A549 (cell line): ENCODE measurements at regions of chr5 and their contacts with region 1.

Region 1: DNA sequence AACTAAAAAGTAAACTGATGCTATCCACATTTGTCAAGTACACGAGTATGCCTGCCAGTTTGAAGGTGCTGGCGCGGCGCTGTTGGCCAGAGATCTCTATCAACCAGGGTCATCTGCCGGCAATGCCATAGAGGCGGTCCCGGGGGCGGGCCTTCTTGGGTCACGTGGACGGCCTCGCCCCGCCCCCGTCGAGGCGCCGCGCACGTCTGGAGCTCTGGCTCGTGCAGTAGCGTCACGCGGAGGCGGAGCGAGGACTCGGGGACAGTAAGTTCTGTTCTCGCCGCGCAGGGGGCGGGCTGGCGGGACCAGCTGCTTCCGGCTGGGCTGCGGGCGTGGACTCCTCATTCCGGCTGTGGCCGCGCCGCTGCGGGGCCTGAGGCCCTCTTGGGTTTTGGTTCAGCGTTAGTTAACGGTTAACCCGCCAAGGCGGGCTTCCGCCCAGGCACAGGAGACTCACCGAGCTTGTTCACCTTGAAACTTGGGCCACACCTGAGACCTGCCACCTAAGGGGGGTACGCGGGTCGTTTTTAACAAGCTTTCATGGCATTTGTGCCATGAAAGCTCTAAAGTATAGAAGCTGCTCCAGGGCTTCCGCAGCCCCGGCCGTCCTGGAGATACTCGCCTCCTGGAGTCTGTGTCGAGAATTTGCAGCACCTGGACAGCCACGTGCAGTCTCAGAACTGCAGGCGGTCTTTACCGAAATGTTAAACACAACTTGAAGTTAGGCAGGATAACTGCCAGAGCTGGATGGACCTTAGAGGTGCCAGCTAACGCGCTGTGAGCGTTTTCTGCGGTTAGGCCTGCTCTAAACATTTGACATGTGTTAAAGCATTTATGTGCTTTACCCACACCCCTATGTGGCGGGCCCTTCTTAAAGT is at the start of gene RFESD:
- DNase-seq: peak; percentile 83 to 99
- ATAC-seq: peak; percentile 98
- H3K4me3 ChIP-seq: peak within 1 kb of the TSS; percentile 47
- H3K27ac ChIP-seq: peak within 1 kb of the TSS; percentile 85 to 87
- H3K4me1 ChIP-seq: peaks cover 14% of the 10 kb centered on the region
- CTCF ChIP-seq: no peak; the same call in 2 of the 3 replicates
- EP300 ChIP-seq: no peak
- POLR2A ChIP-seq: peak; percentile 73
- RAD21 ChIP-seq: peak in 1 of 2 experiments; percentile 32; a peak in 1 of 5 replicates
- polyA plus RNA-seq, gene RFESD: 4.8 and 5.4 TPM in 2 replicates

Region 2: GRCh38 chr5:95664204-95664786 is 17.5 kb after region 1 on chr5:
- CTCF ChIA-PET with region 1: interaction called, 19 read pairs
- POLR2A ChIA-PET with region 1: interaction called, 4 read pairs
- DNase-seq: no peak
- ATAC-seq: no peak
- H3K4me3 ChIP-seq: no peak overlapping the region
- H3K27ac ChIP-seq: peak overlapping the region in 1 of 2 experiments; percentile 18; a peak in 1 of 6 replicates
- H3K4me1 ChIP-seq: peaks cover 3% of the 10 kb centered on the region; the same call in 1 of the 3 replicates
- CTCF ChIP-seq: peak; percentile 88
- EP300 ChIP-seq: no peak
- POLR2A ChIP-seq: no peak
- RAD21 ChIP-seq: peak; percentile 70 to 76

Region 3: GRCh38 chr5:95730730-95731570 is 84.2 kb after region 1 on chr5 and contains the start of gene RHOBTB3:
- CTCF ChIA-PET with region 1: interaction called, 5 read pairs
- POLR2A ChIA-PET with region 1: interaction called, 32 read pairs
- DNase-seq: peak; percentile 49 to 66
- ATAC-seq: peak; percentile 86 to 89
- H3K4me3 ChIP-seq: peak within 1 kb of the TSS; percentile 77
- H3K27ac ChIP-seq: peak within 1 kb of the TSS; percentile 85 to 92
- H3K4me1 ChIP-seq: peaks cover 17% of the 10 kb centered on the region; the same call in 1 of the 3 replicates
- CTCF ChIP-seq: peak; percentile 12; the same call in 1 of the 3 replicates
- EP300 ChIP-seq: no peak
- POLR2A ChIP-seq: peak; percentile 58
- RAD21 ChIP-seq: peak in 1 of 2 experiments; percentile 20; a peak in 1 of 5 replicates
- polyA plus RNA-seq, gene RHOBTB3: 28.6 and 37.5 TPM in 2 replicates

Region 4: DNA sequence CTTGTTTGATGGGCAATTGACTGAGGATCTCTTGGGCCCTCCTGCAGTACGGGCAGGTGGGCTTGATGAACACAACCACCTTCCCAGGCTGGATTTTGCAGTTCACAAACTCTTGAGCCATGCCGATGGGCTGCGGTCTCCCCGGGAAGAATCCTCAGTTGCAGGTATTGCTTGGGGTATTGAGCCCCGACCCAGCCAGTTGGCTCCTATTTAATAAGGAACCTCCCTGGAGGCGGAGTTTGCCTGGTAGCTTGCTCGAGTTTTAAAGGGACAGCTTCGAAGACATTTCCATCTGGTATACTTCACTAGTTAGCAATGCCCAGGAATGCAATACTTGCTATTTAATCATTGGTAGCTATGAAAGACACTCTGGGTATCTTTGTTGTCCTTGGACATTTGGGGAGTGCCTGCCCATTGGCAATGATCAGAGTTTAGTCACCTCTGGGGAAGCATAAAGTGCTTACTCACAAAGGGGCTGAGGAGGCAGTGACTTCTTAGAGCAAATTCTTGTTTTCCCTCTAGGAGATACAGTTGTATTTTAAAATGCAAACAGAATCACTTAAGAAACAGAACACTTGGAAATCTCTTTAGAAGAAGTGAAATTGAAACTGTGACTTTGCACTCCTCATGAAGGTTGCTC is 175.9 kb after region 1 on chr5 and contains the start of gene GLRX:
- CTCF ChIA-PET with region 1: interaction called, 11 read pairs
- POLR2A ChIA-PET with region 1: interaction called, 27 read pairs
- DNase-seq: peak; percentile 81 to 88
- ATAC-seq: peak; percentile 77 to 87
- H3K4me3 ChIP-seq: peak within 1 kb of the TSS; percentile 89
- H3K27ac ChIP-seq: peak within 1 kb of the TSS; percentile 87 to 94
- H3K4me1 ChIP-seq: peaks cover 55% of the 10 kb centered on the region
- CTCF ChIP-seq: no peak
- EP300 ChIP-seq: no peak
- POLR2A ChIP-seq: peak; percentile 78
- RAD21 ChIP-seq: no peak; a peak in 1 of 5 replicates
- polyA plus RNA-seq, gene GLRX: 329 and 381 TPM in 2 replicates

Region 5: GRCh38 chr5:95835682-95836385 is 189.0 kb after region 1 on chr5:
- CTCF ChIA-PET with region 1: interaction called, 9 read pairs
- POLR2A ChIA-PET with region 1: interaction called, 19 read pairs
- DNase-seq: no peak
- ATAC-seq: no peak
- H3K4me3 ChIP-seq: peak overlapping the region; percentile 49
- H3K27ac ChIP-seq: peak overlapping the region; percentile 97 to 100
- H3K4me1 ChIP-seq: peaks cover 39% of the 10 kb centered on the region
- CTCF ChIP-seq: no peak
- EP300 ChIP-seq: no peak
- POLR2A ChIP-seq: no peak
- RAD21 ChIP-seq: no peak